ENCODE measurements at regions of chrX and their contacts with region 1.

Region 1: GRCh38 chrX:132488819-132489577 is at the start of gene MBNL3:
- H3K4me3 Mint-ChIP-seq: peak within 1 kb of the TSS; percentile 96
- H3K27ac Mint-ChIP-seq: peak within 1 kb of the TSS; percentile 99
- H3K4me1 Mint-ChIP-seq: peaks cover 11% of the 10 kb centered on the region
- H3K27me3 Mint-ChIP-seq: no peaks in the 10 kb centered on the region

Region 2: DNA sequence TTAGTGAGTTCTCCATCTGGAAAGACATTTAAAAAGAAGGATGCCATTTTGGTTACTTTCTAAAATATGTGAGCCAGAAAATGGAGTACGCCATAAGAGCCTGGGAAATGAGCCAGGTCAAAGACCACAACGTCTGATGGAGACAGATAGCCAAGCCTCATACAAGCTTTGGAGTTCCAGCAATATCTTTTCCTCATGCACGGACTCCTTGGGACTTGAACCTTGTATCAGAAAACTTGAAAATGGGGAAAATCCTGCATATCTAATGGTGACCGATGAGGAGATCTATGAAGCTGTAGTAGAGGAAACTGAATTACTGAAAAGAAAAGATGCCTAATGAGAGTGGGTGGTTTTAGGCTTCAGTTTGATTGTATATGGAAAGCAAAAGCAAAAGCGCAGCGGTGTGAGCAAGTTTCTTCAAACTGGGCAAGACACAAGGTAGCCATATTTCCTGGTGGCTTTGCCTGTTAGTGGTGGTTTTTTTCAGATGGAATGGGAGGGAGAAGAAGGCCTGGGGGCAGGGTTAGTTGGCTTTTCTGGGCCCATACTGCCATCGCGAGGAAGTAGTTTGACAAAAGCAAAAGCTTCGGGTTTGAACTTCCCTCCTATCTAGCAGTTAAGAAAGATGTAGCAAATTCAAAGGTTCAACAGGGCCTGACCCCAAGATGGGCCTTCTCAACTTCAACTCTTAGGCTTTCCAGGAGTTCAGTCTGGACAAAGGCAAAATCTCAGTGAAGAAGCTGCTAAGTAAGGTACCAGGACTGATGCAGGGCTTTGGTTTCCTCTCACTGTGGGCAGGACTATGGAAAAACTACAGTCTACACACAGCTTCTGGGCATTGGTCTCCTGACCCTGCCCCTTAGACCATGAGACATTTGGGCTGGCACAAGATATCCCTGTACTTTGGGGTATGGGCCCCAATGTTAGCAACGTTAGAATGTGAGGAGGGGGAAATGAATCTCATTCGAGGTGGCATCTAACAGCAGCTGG is 675.9 kb before region 1 on chrX:
- intact Hi-C with region 1: loop called (anchors 10 kb)
- H3K4me3 Mint-ChIP-seq: peak overlapping the region; percentile 70
- H3K27ac Mint-ChIP-seq: peak overlapping the region; percentile 96
- H3K4me1 Mint-ChIP-seq: peaks cover 9% of the 10 kb centered on the region
- H3K27me3 Mint-ChIP-seq: no peaks in the 10 kb centered on the region

Measured in dendritic cell treated with granulocyte-macrophage colony-stimulating factor and Interleukin-4, amounts not matched to agents 40 ng/mL and 50 ng/mL, for 4 days (primary cell).